SK-N-SH (cell line): ENCODE measurements at regions of chr17 and their contacts with region 1.

Region 1: GRCh38 chr17:51435641-51436091 is 175.3 kb downstream of the UTP18 start:
- DNase-seq: peak; percentile 66
- H3K4me3 ChIP-seq: no peak overlapping the region
- H3K27ac ChIP-seq: no peak overlapping the region
- H3K4me1 ChIP-seq: peaks cover 0 to 4% of the 10 kb centered on the region in 2 experiments; a peak in 1 of 4 replicates
- H3K27me3 ChIP-seq: no peaks in the 10 kb centered on the region
- CTCF ChIP-seq: peak; percentile 42
- EP300 ChIP-seq: no peak
- RAD21 ChIP-seq: peak; percentile 63

Region 2: DNA sequence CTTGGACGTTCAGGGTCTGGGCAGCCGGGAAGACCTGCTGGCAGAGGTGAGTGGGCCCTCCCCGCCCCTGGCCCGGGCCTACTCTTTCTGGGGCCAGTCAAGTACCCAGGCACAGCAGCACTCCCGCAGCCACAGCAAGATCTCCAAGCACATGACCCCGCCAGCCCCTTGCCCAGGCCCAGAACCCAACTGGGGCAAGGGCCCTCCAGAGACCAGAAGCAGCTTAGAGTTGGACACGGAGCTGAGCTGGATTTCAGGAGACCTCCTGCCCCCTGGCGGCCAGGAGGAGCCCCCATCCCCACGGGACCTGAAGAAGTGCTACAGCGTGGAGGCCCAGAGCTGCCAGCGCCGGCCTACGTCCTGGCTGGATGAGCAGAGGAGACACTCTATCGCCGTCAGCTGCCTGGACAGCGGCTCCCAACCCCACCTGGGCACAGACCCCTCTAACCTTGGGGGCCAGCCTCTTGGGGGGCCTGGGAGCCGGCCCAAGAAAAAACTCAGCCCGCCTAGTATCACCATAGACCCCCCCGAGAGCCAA is 809.6 kb before region 1 on chr17:
- CTCF ChIA-PET with region 1: no interaction called
- POLR2A ChIA-PET with region 1: no interaction called
- DNase-seq: peak; percentile 93
- H3K4me3 ChIP-seq: no peak overlapping the region; a peak in 1 of 4 replicates
- H3K27ac ChIP-seq: no peak overlapping the region
- H3K4me1 ChIP-seq: peaks cover 3 to 40% of the 10 kb centered on the region in 2 experiments; a peak in 3 of 4 replicates
- H3K27me3 ChIP-seq: no peaks in the 10 kb centered on the region
- CTCF ChIP-seq: peak; percentile 96
- EP300 ChIP-seq: no peak
- RAD21 ChIP-seq: peak; percentile 98

Region 3: DNA sequence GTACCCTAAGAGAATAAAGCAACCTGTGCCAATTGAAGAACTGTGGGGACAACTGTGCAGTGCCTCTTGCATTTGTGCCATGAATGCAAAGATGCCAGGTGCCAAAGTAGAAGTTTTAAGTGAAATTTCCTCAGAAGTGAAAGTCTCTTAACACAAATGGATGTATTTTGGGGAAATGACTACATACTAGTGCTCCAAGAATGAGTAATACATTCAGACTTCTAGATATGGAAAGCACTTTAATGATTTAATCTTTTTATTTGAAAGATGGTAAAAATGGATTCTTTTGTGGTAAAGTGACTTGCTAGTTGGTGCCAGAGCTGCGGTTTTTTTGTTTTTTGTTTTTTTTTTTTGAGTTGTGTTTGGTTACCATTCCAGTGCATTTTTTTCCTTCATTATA is 160.3 kb before region 1 on chr17:
- CTCF ChIA-PET with region 1: no interaction called
- POLR2A ChIA-PET with region 1: no interaction called
- DNase-seq: no peak
- H3K4me3 ChIP-seq: peak overlapping the region in 1 of 2 experiments; percentile 7; a peak in 1 of 4 replicates
- H3K27ac ChIP-seq: peak overlapping the region in 1 of 2 experiments; percentile 63; a peak in 2 of 4 replicates
- H3K4me1 ChIP-seq: peaks cover 0 to 12% of the 10 kb centered on the region in 2 experiments; a peak in 1 of 4 replicates
- H3K27me3 ChIP-seq: no peaks in the 10 kb centered on the region
- CTCF ChIP-seq: no peak
- EP300 ChIP-seq: peak in 1 of 2 experiments; percentile 64; a peak in 1 of 4 replicates
- RAD21 ChIP-seq: no peak

Region 4: DNA sequence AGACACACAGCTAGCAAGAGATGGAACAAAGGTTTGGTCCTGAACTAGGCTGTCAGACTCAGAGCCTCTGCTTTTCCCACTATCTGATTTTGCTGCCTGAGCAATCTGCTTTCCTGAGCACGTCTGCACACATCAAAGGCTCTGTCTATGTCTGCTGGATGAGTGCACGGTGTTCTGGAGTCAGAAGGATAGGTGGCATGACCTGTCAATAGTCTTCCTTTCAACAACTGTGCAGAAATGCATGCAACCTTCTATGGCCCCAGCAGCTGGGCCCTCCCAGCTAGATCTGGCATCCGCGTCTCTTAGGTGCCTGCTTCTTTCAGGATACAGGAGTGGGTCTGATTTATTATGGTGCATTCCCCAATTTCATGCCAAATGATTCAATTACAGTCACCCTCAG is 37.0 kb before region 1 on chr17:
- CTCF ChIA-PET with region 1: interaction called, 10 read pairs
- POLR2A ChIA-PET with region 1: no interaction called
- DNase-seq: peak; percentile 40
- H3K4me3 ChIP-seq: no peak overlapping the region
- H3K27ac ChIP-seq: 0 out of 4 replicates have a peak overlapping the region, but pooled peaks of 1 of the 2 experiments have one; percentile 2
- H3K4me1 ChIP-seq: peaks cover 0 to 5% of the 10 kb centered on the region in 2 experiments; a peak in 1 of 4 replicates
- H3K27me3 ChIP-seq: no peaks in the 10 kb centered on the region
- CTCF ChIP-seq: no peak
- EP300 ChIP-seq: no peak
- RAD21 ChIP-seq: no peak

Region 5: GRCh38 chr17:51419476-51419875 is 16.2 kb before region 1 on chr17:
- CTCF ChIA-PET with region 1: interaction called, 13 read pairs
- POLR2A ChIA-PET with region 1: no interaction called
- DNase-seq: no peak
- H3K4me3 ChIP-seq: no peak overlapping the region
- H3K27ac ChIP-seq: no peak overlapping the region
- H3K4me1 ChIP-seq: no peaks in the 10 kb centered on the region
- H3K27me3 ChIP-seq: no peaks in the 10 kb centered on the region
- CTCF ChIP-seq: no peak
- EP300 ChIP-seq: no peak
- RAD21 ChIP-seq: no peak

Region 6: GRCh38 chr17:51455931-51456330 is 20.3 kb after region 1 on chr17:
- CTCF ChIA-PET with region 1: interaction called, 33 read pairs
- POLR2A ChIA-PET with region 1: no interaction called
- DNase-seq: no peak
- H3K4me3 ChIP-seq: no peak overlapping the region
- H3K27ac ChIP-seq: no peak overlapping the region
- H3K4me1 ChIP-seq: no peaks in the 10 kb centered on the region
- H3K27me3 ChIP-seq: no peaks in the 10 kb centered on the region
- CTCF ChIP-seq: no peak
- EP300 ChIP-seq: no peak
- RAD21 ChIP-seq: no peak